ENCODE measurements at regions of chr15 and their contacts with region 1.

Region 1: GRCh38 chr15:37995461-37996347 is 61.3 kb downstream of the TMCO5A start:
- DNase-seq: no peak
- ATAC-seq: peak; percentile 78
- H3K4me3 ChIP-seq: no peak overlapping the region
- H3K27ac ChIP-seq: no peak overlapping the region
- H3K4me1 ChIP-seq: no peaks in the 10 kb centered on the region
- H3K27me3 ChIP-seq: no peaks in the 10 kb centered on the region
- CTCF ChIP-seq: peak; percentile 69

Region 2: GRCh38 chr15:38005953-38006808 is 10.5 kb after region 1 on chr15:
- CTCF ChIA-PET with region 1: no interaction called
- POLR2A ChIA-PET with region 1: no interaction called
- in situ Hi-C with region 1: no loop called
- intact Hi-C with region 1: no loop called
- DNase-seq: no peak
- ATAC-seq: no peak
- H3K4me3 ChIP-seq: no peak overlapping the region
- H3K27ac ChIP-seq: no peak overlapping the region
- H3K4me1 ChIP-seq: no peaks in the 10 kb centered on the region
- H3K27me3 ChIP-seq: no peaks in the 10 kb centered on the region
- CTCF ChIP-seq: no peak

Region 3: DNA sequence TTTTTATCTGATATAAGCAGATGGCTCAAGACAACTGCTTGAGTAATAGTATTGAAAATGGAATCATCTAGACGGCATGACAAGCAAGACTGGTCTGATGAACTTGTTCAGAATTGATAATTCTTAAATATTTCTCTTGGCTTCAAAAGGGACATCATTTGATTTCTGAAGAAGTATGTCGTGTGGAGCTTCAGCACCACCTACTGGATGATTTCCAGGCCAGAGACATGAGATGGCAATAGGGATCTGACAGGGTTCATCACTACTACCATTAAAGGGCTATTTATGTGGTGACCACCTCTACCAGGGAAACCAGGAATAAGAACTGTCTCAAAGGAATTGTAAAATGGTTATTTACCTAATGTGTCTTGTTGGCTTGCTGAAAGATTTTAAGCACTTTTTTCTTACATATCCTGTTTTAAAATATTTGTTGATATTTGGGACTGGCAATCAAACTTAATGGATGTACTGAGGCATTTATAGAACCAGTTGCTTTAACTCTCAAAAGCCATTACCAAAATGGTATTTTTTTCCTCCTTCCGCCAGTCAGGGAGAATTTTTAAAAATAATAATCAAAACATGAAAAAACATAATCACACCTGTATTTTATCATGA is 358.7 kb after region 1 on chr15:
- CTCF ChIA-PET with region 1: no interaction called
- POLR2A ChIA-PET with region 1: no interaction called
- in situ Hi-C with region 1: no loop called
- intact Hi-C with region 1: loop called (anchors 5 kb)
- DNase-seq: peak; percentile 47
- ATAC-seq: peak; percentile 81
- H3K4me3 ChIP-seq: no peak overlapping the region
- H3K27ac ChIP-seq: no peak overlapping the region
- H3K4me1 ChIP-seq: no peaks in the 10 kb centered on the region
- H3K27me3 ChIP-seq: no peaks in the 10 kb centered on the region
- CTCF ChIP-seq: peak; percentile 79